HepG2 (cell line): ENCODE measurements at regions of chr2 and their contacts with region 1.

Region 1: GRCh38 chr2:197499594-197500526 is at the starts of genes HSPD1 and HSPE1:
- DNase-seq: peak; percentile 100
- ATAC-seq: peak; percentile 91
- H3K4me3 ChIP-seq: peak within 1 kb of the TSS; percentile 68 to 99 (median 95)
- H3K27ac ChIP-seq: peak within 1 kb of the TSS; percentile 96
- H3K4me1 ChIP-seq: peaks cover 60% of the 10 kb centered on the region
- H3K27me3 ChIP-seq: no peaks in the 10 kb centered on the region; a peak in 1 of 5 replicates
- CTCF ChIP-seq: 0 out of 2 replicates have a peak, but pooled peaks have one; percentile 1
- EP300 ChIP-seq: peak in 1 of 2 experiments; percentile 99; a peak in 3 of 4 replicates
- POLR2A ChIP-seq: peak; percentile 97 to 100
- RAD21 ChIP-seq: peak; percentile 65
- total RNA-seq, gene HSPD1: 2,610 and 3,898 TPM in 2 replicates
- total RNA-seq, gene HSPE1: 823 and 1,040 TPM in 2 replicates

Region 2: GRCh38 chr2:197434541-197435513 is 65.0 kb before region 1 on chr2 and contains the start of gene SF3B1:
- CTCF ChIA-PET with region 1: no interaction called
- POLR2A ChIA-PET with region 1: interaction called, 102 read pairs
- in situ Hi-C with region 1: no loop called
- intact Hi-C with region 1: loop called (anchors 1 kb)
- DNase-seq: peak; percentile 97
- ATAC-seq: peak; percentile 90
- H3K4me3 ChIP-seq: peak within 1 kb of the TSS; percentile 86 to 99 (median 99)
- H3K27ac ChIP-seq: peak within 1 kb of the TSS; percentile 95
- H3K4me1 ChIP-seq: peaks cover 52% of the 10 kb centered on the region
- H3K27me3 ChIP-seq: peaks cover 0 to 4% of the 10 kb centered on the region in 2 experiments; a peak in 1 of 5 replicates
- CTCF ChIP-seq: 0 out of 2 replicates have a peak, but pooled peaks have one; percentile 19
- EP300 ChIP-seq: peak in 1 of 2 experiments; percentile 48; a peak in 2 of 4 replicates
- POLR2A ChIP-seq: peak; percentile 97 to 98
- RAD21 ChIP-seq: peak; percentile 46
- total RNA-seq, gene SF3B1: 387 and 499 TPM in 2 replicates

Region 3: DNA sequence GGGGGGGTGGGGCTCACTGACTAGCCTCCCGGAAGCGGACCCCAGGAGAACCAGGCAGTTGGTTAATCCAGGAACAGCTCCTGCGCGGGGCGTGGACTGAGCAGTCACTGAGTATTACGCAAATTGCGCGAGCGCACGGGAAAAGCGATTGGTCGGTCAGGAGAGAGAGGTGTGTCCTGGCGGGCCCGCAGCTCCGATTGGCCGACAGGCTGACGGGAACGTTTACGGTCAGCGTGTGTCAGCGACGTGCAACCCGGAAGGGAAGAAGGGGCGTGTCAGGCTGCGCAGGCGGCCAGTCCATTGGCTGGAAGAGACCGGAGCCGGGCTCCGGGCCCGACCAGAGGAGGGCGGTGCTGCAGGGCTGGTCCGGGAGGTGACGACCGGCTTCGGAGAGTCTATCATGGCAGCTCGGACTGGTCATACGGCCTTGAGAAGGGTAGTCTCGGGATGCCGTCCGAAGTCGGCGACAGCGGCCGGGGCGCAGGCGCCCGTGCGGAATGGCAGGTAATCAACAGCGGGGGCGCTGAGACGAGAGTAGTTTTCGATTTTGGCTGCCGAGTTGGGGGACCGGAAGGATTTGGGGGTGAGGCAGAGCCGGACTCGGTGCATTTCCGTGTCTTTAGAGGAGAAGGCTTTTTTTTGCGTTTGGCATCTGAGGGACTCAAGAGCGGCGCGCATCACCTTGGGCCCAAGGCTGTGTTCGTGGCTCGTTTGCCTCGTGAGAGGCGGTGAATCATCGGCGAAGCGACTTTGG is 46.5 kb before region 1 on chr2 and contains the start of gene COQ10B:
- CTCF ChIA-PET with region 1: no interaction called
- POLR2A ChIA-PET with region 1: interaction called, 264 read pairs
- in situ Hi-C with region 1: no loop called
- intact Hi-C with region 1: loop called (anchors 1 kb)
- DNase-seq: peak; percentile 100
- ATAC-seq: peak; percentile 89
- H3K4me3 ChIP-seq: peak within 1 kb of the TSS; percentile 80 to 96 (median 95)
- H3K27ac ChIP-seq: peak within 1 kb of the TSS; percentile 97
- H3K4me1 ChIP-seq: peaks cover 31% of the 10 kb centered on the region
- H3K27me3 ChIP-seq: no peaks in the 10 kb centered on the region; a peak in 1 of 5 replicates
- CTCF ChIP-seq: peak; percentile 73
- EP300 ChIP-seq: peak; percentile 37 to 56; a peak in 2 of 4 replicates
- POLR2A ChIP-seq: peak; percentile 72 to 97
- RAD21 ChIP-seq: peak; percentile 81
- total RNA-seq, gene COQ10B: 34.9 and 41.8 TPM in 2 replicates

Region 4: DNA sequence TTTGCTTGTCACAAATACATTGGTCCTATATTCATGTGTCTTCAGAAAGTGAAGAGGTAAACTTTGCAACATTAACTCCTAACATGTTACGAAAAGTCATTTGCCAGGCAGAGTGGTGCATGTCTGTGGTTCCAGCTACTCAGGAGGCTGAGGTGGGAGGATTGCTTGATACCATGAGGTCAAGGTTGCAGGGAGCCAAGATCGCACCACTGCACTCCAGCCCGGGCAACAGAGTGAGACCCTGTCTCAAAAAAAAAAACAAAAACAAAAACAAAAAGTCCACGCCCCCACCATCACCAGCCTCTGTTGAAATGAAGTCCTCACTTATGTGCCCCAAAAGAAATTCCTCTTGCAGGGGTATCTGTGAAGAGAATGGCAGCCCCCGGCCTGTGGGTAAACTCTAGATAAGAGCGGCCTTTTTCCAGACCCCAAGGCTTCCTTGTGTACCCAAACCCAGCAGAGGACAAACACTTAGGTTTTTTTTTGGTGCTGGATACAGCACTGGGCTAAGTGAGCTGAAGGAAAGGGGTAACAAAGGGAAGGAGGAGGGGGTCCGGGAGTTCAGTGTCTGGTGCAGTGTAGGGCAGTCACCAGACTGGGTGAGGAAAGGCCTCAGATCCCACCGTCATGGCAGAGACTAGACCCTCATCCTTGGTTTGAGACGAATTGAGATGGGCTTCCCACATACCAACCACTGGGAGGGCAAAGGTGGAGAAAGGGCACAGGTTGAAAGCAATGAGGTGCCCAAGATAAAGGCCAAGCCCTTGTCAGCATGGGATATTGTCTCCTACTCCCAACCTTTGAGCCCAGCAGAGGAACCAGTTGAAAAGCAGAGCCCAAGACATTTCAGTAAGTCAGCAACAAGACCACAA is 19.5 kb before region 1 on chr2:
- CTCF ChIA-PET with region 1: no interaction called
- POLR2A ChIA-PET with region 1: interaction called, 143 read pairs
- in situ Hi-C with region 1: no loop called
- intact Hi-C with region 1: loop called (anchors 1 kb)
- DNase-seq: no peak
- ATAC-seq: peak; percentile 32
- H3K4me3 ChIP-seq: peak overlapping the region; percentile 26 to 63 (median 38); a peak in 5 of 6 replicates
- H3K27ac ChIP-seq: peak overlapping the region; percentile 91
- H3K4me1 ChIP-seq: peaks cover 69% of the 10 kb centered on the region
- H3K27me3 ChIP-seq: no peaks in the 10 kb centered on the region
- CTCF ChIP-seq: no peak
- EP300 ChIP-seq: no peak
- POLR2A ChIP-seq: no peak
- RAD21 ChIP-seq: no peak

Region 5: DNA sequence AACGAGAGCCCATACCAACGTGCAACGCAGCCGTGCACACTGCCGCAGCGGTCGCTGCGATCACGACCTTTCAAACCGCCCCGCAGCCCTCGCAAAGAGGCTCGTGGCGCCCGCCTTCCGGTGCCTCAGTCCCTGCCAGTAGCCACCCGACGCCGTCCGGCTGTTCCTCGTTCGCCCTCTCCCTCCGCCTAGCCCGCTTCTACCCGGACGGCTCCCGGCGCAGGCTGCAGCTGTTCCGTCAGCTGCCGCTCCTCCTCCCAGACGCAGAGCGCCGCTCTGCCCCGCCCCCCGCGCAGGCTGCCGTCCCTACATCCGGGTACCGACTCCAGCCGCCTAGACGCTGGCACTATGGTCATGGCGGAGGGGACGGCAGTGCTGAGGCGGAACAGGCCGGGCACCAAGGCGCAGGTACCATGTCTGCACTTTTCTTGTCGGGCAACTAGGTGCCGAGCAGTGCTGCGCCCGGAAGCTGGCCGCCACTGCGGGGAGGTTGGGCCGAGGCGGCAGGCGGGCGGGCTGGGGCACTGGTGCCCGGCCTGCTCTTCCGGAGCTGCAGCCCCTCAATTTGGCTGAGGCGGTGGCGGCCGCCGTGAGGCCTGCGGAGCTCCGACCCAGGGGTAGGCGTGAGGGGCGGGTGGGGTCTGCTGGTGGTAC is 16.0 kb after region 1 on chr2 and contains the start of gene MOB4:
- CTCF ChIA-PET with region 1: no interaction called
- POLR2A ChIA-PET with region 1: interaction called, 177 read pairs
- in situ Hi-C with region 1: no loop called
- intact Hi-C with region 1: loop called (anchors 1 kb)
- DNase-seq: peak; percentile 93
- ATAC-seq: peak; percentile 96
- H3K4me3 ChIP-seq: peak within 1 kb of the TSS; percentile 89 to 98 (median 91)
- H3K27ac ChIP-seq: peak within 1 kb of the TSS; percentile 77
- H3K4me1 ChIP-seq: peaks cover 45% of the 10 kb centered on the region
- H3K27me3 ChIP-seq: no peaks in the 10 kb centered on the region; a peak in 1 of 5 replicates
- CTCF ChIP-seq: peak; percentile 53
- EP300 ChIP-seq: peak; percentile 88 to 100
- POLR2A ChIP-seq: peak; percentile 96 to 97
- RAD21 ChIP-seq: peak; percentile 81
- total RNA-seq, gene MOB4: 38.6 and 68.3 TPM in 2 replicates

Region 6: GRCh38 chr2:197599285-197599965 is 99.6 kb after region 1 on chr2:
- CTCF ChIA-PET with region 1: no interaction called
- POLR2A ChIA-PET with region 1: interaction called, 14 read pairs
- in situ Hi-C with region 1: no loop called
- intact Hi-C with region 1: loop called (anchors 2 kb)
- DNase-seq: peak; percentile 69
- ATAC-seq: peak; percentile 97
- H3K4me3 ChIP-seq: peak overlapping the region in 1 of 3 experiments; percentile 14; a peak in 1 of 6 replicates
- H3K27ac ChIP-seq: no peak overlapping the region
- H3K4me1 ChIP-seq: peaks cover 23% of the 10 kb centered on the region
- H3K27me3 ChIP-seq: peaks cover 0 to 17% of the 10 kb centered on the region in 2 experiments; a peak in 2 of 5 replicates
- CTCF ChIP-seq: peak; percentile 52
- EP300 ChIP-seq: no peak
- POLR2A ChIP-seq: no peak
- RAD21 ChIP-seq: no peak

Region 7: DNA sequence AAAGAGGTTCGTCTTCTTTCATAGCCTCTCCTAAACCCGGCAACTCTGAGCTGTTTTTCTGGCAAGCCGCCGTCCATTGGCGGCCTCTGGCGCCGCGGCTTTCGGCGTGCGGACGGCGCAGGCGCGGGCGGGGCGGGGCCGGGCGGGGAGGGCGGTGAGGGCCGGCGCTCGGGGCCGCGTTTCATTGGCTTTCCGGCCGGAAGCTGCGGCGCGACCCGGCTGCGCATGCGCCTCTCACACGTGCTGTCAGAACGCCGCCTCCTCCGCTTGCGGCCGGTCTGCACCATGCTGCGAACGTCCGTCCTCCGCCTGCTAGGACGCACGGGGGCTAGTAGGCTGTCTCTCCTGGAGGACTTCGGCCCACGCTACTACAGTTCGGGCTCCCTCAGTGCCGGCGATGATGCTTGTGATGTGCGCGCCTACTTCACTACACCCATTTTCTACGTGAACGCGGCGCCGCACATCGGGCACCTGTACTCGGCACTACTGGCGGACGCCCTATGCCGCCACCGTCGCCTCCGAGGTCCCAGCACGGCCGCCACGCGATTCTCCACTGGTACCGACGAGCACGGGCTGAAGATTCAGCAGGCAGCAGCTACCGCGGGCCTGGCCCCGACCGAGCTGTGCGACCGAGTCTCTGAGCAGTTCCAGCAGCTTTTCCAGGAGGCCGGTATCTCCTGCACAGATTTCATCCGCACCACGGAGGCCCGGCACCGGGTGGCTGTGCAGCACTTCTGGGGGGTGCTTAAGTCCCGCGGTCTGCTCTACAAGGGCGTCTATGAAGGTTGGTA is 205.5 kb after region 1 on chr2 and contains the start of gene MARS2:
- CTCF ChIA-PET with region 1: no interaction called
- POLR2A ChIA-PET with region 1: interaction called, 40 read pairs
- in situ Hi-C with region 1: no loop called
- intact Hi-C with region 1: no loop called
- DNase-seq: peak; percentile 88
- ATAC-seq: peak; percentile 88
- H3K4me3 ChIP-seq: peak within 1 kb of the TSS; percentile 60 to 86 (median 85)
- H3K27ac ChIP-seq: peak within 1 kb of the TSS; percentile 54
- H3K4me1 ChIP-seq: peaks cover 30% of the 10 kb centered on the region
- H3K27me3 ChIP-seq: no peaks in the 10 kb centered on the region; a peak in 1 of 5 replicates
- CTCF ChIP-seq: peak; percentile 42
- EP300 ChIP-seq: no peak; a peak in 1 of 4 replicates
- POLR2A ChIP-seq: peak; percentile 93 to 97
- RAD21 ChIP-seq: peak; percentile 17; the same call in 1 of the 2 replicates
- total RNA-seq, gene MARS2: 16.2 and 19.5 TPM in 2 replicates